Posterior vena cava (tissue), 2 donors: ENCODE measurements at regions of chr11 and their contacts with region 1.

Region 1: GRCh38 chr11:73661035-73661628 is 14.8 kb downstream of the PLEKHB1 start:
- DNase-seq: peak; percentile 97

Region 2: GRCh38 chr11:73404048-73404447 is 257.1 kb before region 1 on chr11:
- intact Hi-C with region 1: loop called in 1 of 2 experiments (anchors 5 kb)
- DNase-seq: peak; percentile 90

Region 3: GRCh38 chr11:73625696-73626318 is 35.3 kb before region 1 on chr11:
- intact Hi-C with region 1: loop called in 1 of 2 experiments (anchors 5 kb)
- DNase-seq: peak; percentile 83